ENCODE measurements at regions of chr14 and their contacts with region 1.

Region 1: DNA sequence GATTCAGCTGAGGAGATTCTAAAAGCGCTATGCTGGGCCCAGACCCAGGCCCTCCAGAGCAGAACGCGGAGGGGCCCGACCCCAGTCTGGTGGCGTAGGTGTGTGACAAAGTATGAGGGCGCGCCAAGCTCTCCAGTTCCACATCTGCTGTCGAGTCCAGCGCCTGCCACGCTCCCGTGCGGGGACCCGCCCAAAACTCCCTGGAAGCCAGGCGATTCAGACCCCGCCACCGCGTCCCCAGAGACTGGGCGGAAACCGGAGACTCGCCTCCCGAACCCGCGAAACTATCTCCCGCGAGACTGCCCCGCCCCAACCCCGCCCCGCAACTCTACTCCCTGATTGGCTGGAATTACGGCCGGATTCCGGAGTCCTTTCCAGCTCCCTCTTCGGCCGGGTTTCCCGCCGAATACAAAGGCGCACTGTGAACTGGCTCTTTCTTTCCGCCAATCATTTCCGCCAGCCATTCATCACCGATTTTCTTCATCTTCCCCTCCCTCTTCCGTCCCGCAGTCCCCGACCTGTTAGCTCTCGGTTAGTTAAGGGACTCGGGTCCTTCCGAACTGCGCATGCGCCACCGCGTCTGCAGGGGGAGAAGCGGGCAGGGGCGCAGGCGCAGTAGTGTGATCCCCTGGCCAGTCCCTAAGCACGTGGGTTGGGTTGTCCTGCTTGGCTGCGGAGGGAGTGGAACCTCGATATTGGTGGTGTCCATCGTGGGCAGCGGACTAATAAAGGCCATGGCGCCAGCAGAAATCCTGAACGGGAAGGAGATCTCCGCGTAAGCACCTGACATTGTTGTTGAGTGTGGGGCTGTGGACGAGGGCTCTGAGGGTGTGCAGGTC is at the start of gene MTHFD1:
- DNase-seq: peak; percentile 96
- H3K4me3 Mint-ChIP-seq: peak within 1 kb of the TSS; percentile 97
- H3K27ac Mint-ChIP-seq: peak within 1 kb of the TSS; percentile 90
- H3K4me1 Mint-ChIP-seq: peaks cover 29% of the 10 kb centered on the region
- H3K27me3 Mint-ChIP-seq: no peaks in the 10 kb centered on the region
- total RNA-seq, gene MTHFD1: 241 and 244 TPM in 2 replicates

Region 2: GRCh38 chr14:63852817-63853731 is 534.8 kb before region 1 on chr14 and contains the start of gene SYNE2:
- intact Hi-C with region 1: loop called (anchors 1 kb)
- DNase-seq: peak; percentile 81
- H3K4me3 Mint-ChIP-seq: peak within 1 kb of the TSS; percentile 97
- H3K27ac Mint-ChIP-seq: peak within 1 kb of the TSS; percentile 97
- H3K4me1 Mint-ChIP-seq: peaks cover 43% of the 10 kb centered on the region
- H3K27me3 Mint-ChIP-seq: peaks cover 4% of the 10 kb centered on the region
- total RNA-seq, gene SYNE2: 25.1 and 26.9 TPM in 2 replicates

Region 3: DNA sequence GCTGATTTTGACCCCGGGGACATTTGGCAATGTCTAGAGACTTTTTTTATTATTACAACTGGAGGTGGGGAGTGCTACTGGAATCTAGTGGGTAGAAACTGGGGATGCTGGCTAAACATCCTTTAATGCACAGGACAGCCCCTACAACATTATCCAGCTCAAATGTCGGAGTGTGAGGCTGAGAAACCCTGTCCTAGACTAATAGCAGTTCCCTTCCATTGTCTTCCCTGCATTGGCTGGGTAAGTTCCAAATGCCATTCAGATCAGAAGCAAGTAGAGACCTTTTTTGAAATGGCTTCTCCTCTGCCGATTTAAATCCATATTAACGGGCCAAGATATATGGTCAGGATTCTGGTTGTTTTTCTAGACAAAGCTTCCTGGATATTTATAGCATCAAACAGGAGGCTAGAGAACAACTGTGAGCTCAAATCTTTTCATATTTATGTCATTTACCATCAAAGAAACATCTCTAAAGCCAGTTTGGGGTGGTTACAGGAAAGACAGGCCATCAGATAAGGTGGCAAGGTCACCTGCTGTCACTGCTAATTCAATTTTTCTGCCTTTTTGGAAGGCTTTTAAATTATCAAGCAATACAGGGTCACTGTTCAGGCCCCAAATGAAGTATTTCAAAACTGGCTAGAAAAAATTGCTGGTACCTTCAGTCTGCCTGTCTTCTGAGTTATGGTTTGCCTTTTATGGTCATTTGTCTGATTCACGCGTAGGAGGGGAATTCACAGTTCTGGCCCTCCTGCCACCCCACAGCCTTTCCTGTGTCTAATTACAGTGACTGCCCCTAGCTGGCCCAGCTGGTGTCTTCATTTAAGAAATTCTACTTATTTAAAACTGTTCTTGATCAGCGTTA is 57.3 kb after region 1 on chr14:
- intact Hi-C with region 1: loop called (anchors 2 kb)
- DNase-seq: peak; percentile 43
- H3K4me3 Mint-ChIP-seq: peak overlapping the region; percentile 68
- H3K27ac Mint-ChIP-seq: peak overlapping the region; percentile 87
- H3K4me1 Mint-ChIP-seq: peaks cover 28% of the 10 kb centered on the region
- H3K27me3 Mint-ChIP-seq: no peaks in the 10 kb centered on the region

Region 4: DNA sequence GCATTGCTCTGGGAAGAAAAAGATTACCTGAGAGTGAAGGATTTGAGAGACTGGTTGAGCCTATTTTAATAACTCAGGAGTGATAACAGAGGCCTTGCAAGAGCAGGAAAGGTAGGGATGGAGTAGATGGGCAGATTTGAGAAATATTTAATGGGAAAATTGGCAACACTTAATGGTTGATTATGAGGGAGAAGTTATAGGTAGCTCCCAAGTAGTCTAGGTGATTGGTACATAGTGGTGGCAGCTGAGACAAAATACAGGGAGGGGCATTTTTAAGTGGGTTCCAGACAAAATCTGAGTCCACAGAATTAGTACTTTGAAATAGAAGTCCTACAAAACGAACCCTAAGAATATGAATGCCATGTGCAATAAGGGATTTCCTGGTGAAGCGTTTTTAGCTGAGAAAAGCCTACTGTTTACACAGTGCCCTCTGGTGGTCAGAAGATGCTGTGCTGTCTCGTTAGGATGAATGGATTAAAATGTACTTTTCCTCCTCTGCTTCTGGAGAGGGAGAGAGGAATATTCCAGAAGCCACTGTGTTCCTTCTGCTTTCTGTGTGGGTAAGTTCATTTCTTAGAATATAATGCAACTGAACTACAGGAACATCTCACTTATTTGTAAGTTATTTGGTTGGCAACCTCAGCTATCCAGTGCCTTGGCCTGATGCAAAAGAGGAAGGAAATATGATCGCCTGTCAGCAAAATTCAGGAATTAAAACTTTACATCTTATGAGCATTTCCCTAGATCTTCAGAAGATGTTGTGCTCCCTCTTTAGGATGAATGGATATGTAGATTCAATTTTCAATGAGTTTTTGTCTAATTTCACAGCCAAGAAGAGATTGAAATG is 123.1 kb after region 1 on chr14:
- intact Hi-C with region 1: loop called (anchors 1 kb)
- DNase-seq: peak; percentile 58
- H3K4me3 Mint-ChIP-seq: peak overlapping the region; percentile 63
- H3K27ac Mint-ChIP-seq: peak overlapping the region; percentile 69
- H3K4me1 Mint-ChIP-seq: peaks cover 74% of the 10 kb centered on the region
- H3K27me3 Mint-ChIP-seq: no peaks in the 10 kb centered on the region

Region 5: DNA sequence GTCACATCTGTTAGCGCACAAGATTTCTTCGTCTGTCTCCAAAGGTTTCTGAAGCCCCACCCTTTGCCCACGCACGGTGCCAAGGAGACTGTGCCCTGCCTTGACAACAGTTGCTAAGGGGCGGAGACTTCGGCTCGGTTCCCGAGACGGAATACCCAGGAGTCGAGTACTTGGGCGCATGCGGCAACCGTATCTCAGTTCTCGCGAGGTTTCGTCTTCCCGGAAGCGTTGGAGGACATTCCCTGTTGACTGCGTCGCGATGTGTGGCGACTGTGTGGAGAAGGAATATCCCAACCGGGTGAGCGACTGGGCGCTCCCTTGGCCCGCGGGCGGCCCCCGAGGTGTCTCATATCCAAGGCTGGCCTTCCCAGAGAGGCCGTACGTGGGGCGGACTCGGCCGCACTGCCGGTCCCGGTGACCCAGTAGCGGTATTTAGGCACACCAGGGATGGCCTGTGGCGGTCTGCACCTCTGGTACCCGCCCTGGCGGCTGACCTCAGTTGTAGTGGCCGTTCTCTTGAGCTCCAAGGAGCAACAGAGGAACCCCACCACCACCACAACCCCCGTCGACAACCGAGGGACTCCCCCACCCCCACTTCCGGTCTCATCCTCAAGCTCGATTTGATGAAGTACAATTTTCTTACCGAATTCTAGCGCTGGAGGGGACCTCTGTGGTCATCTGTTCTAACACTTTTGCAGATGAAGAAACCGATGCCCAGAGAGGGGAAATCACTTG is 526.5 kb after region 1 on chr14 and contains the start of gene CHURC1:
- intact Hi-C with region 1: loop called (anchors 1 kb)
- DNase-seq: peak; percentile 93
- H3K4me3 Mint-ChIP-seq: peak within 1 kb of the TSS; percentile 88
- H3K27ac Mint-ChIP-seq: peak within 1 kb of the TSS; percentile 94
- H3K4me1 Mint-ChIP-seq: peaks cover 51% of the 10 kb centered on the region
- H3K27me3 Mint-ChIP-seq: peaks cover 5% of the 10 kb centered on the region
- total RNA-seq, gene CHURC1: 50.7 and 51.3 TPM in 2 replicates

Measured in activated T-helper 1 cell treated with anti-CD3 and anti-CD28 coated beads, Interleukin-12 subunit alpha, Interleukin-12 subunit beta, Interleukin-2, Interleukin-4 antibody, amounts not matched to agents 30 ng/mL and 10 ng/mL and 1 ng/mL, durations not matched to agents 14 hours and 24 hours and 36 hours (primary cell).